Left cardiac atrium (tissue), 4 donors: ENCODE measurements at regions of chr1 and their contacts with region 1.

Region 1: GRCh38 chr1:31422505-31423319 is 9.7 kb downstream of the SERINC2 start:
- DNase-seq: peak; percentile 62
- ATAC-seq: peak; percentile 81 to 92

Region 2: GRCh38 chr1:31394628-31395193 is 28.0 kb before region 1 on chr1:
- intact Hi-C with region 1: loop called (anchors 2 kb)
- DNase-seq: peak; percentile 84
- ATAC-seq: peak; percentile 91 to 96